Sigmoid colon (tissue), 7 donors: ENCODE measurements at regions of chr17 and their contacts with region 1.

Region 1: DNA sequence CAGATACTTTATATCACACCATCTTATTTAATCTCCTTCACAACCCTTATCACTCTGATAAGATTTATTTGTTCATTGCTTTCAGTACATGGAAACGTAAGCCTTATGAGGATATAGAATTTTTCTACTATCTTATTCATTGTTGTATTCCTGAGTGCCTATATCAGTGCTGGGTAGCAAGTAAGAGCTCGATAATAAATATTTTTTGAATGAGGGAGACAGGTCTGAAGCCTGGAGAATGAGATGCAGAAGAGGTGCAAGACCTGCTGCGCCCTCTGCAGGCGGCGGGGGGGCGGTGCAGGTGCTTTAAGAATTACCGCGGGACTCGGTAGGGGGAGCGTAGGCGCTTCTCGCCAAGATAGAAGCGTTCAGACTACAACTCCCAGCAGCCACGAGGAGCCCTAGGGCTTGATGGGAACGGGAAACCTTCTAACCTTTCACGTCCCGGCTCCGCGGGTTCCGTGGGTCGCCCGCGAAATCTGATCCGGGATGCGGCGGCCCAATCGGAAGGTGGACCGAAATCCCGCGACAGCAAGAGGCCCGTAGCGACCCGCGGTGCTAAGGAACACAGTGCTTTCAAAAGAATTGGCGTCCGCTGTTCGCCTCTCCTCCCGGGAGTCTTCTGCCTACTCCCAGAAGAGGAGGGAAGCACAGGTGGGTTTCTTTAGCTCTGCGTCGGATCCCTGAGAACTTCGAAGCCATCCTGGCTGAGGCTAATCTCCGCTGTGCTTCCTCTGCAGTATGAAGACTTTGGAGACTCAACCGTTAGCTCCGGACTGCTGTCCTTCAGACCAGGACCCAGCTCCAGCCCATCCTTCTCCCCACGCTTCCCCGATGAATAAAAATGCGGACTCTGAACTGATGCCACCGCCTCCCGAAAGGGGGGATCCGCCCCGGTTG is at the start of gene WRAP53:
- DNase-seq: peak; percentile 99
- H3K4me3 ChIP-seq: peak within 1 kb of the TSS; percentile 75 to 92 (median 82)
- H3K27ac ChIP-seq: peak within 1 kb of the TSS; percentile 90 to 97 (median 96)
- H3K4me1 ChIP-seq: peaks cover 0 to 28% (median 26%) of the 10 kb centered on the region in 4 donors
- H3K27me3 ChIP-seq: no peaks in the 10 kb centered on the region
- CTCF ChIP-seq: peak; percentile 95 to 99 (median 98)
- EP300 ChIP-seq: peak in 1 of 4 donors; percentile 30
- POLR2A ChIP-seq: no peak
- total RNA-seq, gene WRAP53: 3.9 to 16.3 (median 4.8) TPM

Region 2: GRCh38 chr17:7515911-7516610 is 172.1 kb before region 1 on chr17:
- intact Hi-C with region 1: loop called (anchors 10 kb)
- DNase-seq: no peak
- H3K4me3 ChIP-seq: no peak overlapping the region
- H3K27ac ChIP-seq: no peak overlapping the region
- H3K4me1 ChIP-seq: no peaks in the 10 kb centered on the region
- H3K27me3 ChIP-seq: no peaks in the 10 kb centered on the region
- CTCF ChIP-seq: no peak
- EP300 ChIP-seq: no peak
- POLR2A ChIP-seq: no peak

Region 3: GRCh38 chr17:7614422-7615264 is 73.5 kb before region 1 on chr17 and contains the start of gene FXR2:
- intact Hi-C with region 1: loop called (anchors 1 kb)
- DNase-seq: peak; percentile 100
- H3K4me3 ChIP-seq: peak within 1 kb of the TSS; percentile 57 to 95 (median 80)
- H3K27ac ChIP-seq: peak within 1 kb of the TSS; percentile 91 to 100 (median 95)
- H3K4me1 ChIP-seq: peaks cover 0 to 47% (median 40%) of the 10 kb centered on the region in 4 donors
- H3K27me3 ChIP-seq: no peaks in the 10 kb centered on the region
- CTCF ChIP-seq: peak in 3 of 4 experiments; percentile 49 to 52 (median 51)
- EP300 ChIP-seq: no peak
- POLR2A ChIP-seq: no peak
- total RNA-seq, gene FXR2: 33.8 to 35.5 (median 34.6) TPM

Region 4: GRCh38 chr17:7627250-7628121 is 60.7 kb before region 1 on chr17 and contains the start of gene SAT2:
- intact Hi-C with region 1: loop called (anchors 2 kb)
- DNase-seq: peak; percentile 99
- H3K4me3 ChIP-seq: peak within 1 kb of the TSS; percentile 62 to 86 (median 77)
- H3K27ac ChIP-seq: peak within 1 kb of the TSS; percentile 89 to 97 (median 96)
- H3K4me1 ChIP-seq: peaks cover 0 to 17% (median 14%) of the 10 kb centered on the region in 4 donors
- H3K27me3 ChIP-seq: no peaks in the 10 kb centered on the region
- CTCF ChIP-seq: no peak
- EP300 ChIP-seq: peak in 1 of 4 donors; percentile 14
- POLR2A ChIP-seq: peak; percentile 69 to 75
- total RNA-seq, gene SAT2: 72.9 to 116 (median 99.2) TPM

Region 5: GRCh38 chr17:7650509-7651096 is 37.6 kb before region 1 on chr17 and contains the start of gene ATP1B2:
- intact Hi-C with region 1: loop called (anchors 5 kb)
- DNase-seq: peak; percentile 93
- H3K4me3 ChIP-seq: peak within 1 kb of the TSS; percentile 39 to 55 (median 52)
- H3K27ac ChIP-seq: peak within 1 kb of the TSS; percentile 51 to 68 (median 58)
- H3K4me1 ChIP-seq: peaks cover 0 to 21% (median 18%) of the 10 kb centered on the region in 4 donors
- H3K27me3 ChIP-seq: peaks cover 11 to 61% (median 29%) of the 10 kb centered on the region in 3 donors
- CTCF ChIP-seq: no peak
- EP300 ChIP-seq: no peak
- POLR2A ChIP-seq: no peak
- total RNA-seq, gene ATP1B2: 1.2 to 4.2 (median 1.5) TPM

Region 6: DNA sequence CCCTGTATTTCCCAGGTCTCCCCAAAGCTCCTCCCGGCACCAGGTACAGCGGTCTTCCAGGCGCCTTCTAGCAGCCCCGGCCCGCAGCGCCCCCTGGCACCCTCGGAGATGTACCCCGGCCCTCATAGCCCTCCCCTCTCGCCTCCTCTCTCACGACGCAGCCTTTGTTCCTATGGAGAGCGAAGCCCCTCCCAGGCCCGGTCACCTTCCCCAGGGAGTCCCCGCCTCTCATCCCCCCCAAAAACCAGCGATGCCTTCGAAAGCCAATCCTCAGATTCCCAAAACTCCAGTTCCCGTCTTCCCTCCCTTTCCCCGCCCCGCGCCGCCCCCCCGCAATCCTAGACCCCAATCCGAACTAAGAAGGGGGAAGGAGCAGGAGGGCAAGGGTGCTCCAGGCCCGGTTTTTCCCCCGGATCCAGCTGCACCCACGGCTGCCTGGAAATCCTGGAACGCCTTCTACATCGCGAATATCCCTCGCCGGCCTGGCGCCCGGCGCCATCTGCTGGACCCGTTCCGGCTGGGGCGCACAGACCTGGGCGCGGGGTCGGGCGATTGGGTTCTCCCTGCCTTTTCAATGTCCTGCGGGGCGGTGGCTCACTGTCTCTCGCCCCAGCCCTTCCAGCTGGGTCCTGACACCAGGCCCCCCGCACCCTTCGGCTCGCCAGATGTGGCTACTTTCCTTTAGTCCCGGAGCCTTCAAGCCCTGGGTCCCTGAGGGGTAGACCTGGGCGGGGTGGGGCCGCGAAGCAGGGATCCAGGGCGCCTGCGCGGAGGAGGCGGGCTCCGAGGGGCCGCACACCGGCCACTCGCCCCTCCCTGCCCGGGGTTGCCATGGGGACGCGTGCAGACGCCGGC is 29.0 kb after region 1 on chr17 and contains the start of gene DNAH2:
- intact Hi-C with region 1: loop called (anchors 1 kb)
- DNase-seq: peak; percentile 90
- H3K4me3 ChIP-seq: peak within 1 kb of the TSS; percentile 43 to 68 (median 57)
- H3K27ac ChIP-seq: peak within 1 kb of the TSS; percentile 58 to 71 (median 62)
- H3K4me1 ChIP-seq: peaks cover 0 to 23% (median 20%) of the 10 kb centered on the region in 4 donors
- H3K27me3 ChIP-seq: peaks cover 5 to 44% (median 26%) of the 10 kb centered on the region in 3 donors
- CTCF ChIP-seq: peak in 3 of 4 experiments; percentile 6 to 27 (median 13)
- EP300 ChIP-seq: no peak
- POLR2A ChIP-seq: no peak
- total RNA-seq, gene DNAH2: under 0.01 to 0.36 (median 0.28) TPM in 3 of 4 donors, not detected in the other